Right ventricle myocardium superior (tissue), 1 donor: ENCODE measurements at regions of chr1 and their contacts with region 1.

Region 1: GRCh38 chr1:87151500-87152421 is 176.9 kb upstream of the LMO4 start:
- DNase-seq: peak; percentile 84
- ATAC-seq: peak; percentile 96

Region 2: DNA sequence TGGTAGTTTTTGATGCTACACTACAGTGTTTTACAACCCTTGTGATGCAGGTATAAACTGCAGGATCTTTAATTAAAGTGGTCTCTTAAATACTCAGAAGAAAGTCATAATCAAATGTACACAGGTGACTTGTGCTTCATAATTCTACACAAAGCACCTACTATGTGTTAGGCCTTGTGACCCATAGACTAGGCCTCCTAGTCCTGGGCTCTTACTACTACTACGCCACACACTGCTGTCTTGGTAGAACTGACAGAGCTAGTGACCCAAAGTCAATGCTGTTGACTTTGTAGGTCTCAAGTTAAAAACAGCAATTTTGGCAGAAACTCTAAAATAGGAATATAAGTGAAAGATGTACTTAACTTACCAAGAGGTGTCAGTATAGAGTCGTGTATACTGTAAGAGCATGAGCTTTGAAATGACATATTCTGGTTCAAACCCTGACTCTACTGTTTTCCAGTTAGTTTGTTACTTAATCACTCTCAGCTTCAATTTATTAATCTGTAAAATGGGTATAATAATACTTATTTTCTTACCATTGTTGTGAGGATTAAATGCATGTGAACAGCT is 128.3 kb after region 1 on chr1:
- intact Hi-C with region 1: loop called (anchors 10 kb)
- DNase-seq: no peak
- ATAC-seq: no peak

Region 3: DNA sequence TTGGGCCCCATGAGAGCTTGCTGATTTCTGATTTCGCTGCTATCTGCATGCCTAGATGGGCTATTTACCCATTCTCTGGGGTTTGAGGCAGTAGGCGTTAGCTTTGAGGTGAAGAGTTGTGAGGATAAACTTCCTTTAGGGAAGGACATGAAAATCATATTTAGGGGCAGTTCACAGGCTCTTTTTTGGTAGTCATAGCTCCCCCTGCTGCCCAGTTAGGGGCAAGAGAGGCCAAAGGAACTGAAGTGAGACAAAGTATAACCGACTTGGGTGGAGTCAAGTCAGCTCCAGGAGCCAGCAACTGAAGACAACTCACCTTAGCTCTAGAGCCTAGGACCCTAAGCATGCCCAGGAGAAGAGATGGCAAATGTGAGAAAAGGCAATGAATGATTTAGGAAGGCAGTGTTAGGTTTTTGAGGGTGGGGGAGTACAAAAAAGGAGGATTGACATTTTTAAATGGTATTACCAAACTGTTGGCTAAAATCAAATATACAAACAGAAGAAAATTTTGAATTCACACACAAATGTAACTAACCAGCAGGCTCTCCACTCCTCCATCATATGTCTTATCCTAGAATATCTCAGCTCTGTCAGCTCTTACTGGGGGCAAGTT is 802.1 kb after region 1 on chr1:
- intact Hi-C with region 1: loop called (anchors 10 kb)
- DNase-seq: peak; percentile 51
- ATAC-seq: peak; percentile 82